Natural killer cell (primary cell): ENCODE measurements at regions of chr1 and their contacts with region 1.

Region 1: DNA sequence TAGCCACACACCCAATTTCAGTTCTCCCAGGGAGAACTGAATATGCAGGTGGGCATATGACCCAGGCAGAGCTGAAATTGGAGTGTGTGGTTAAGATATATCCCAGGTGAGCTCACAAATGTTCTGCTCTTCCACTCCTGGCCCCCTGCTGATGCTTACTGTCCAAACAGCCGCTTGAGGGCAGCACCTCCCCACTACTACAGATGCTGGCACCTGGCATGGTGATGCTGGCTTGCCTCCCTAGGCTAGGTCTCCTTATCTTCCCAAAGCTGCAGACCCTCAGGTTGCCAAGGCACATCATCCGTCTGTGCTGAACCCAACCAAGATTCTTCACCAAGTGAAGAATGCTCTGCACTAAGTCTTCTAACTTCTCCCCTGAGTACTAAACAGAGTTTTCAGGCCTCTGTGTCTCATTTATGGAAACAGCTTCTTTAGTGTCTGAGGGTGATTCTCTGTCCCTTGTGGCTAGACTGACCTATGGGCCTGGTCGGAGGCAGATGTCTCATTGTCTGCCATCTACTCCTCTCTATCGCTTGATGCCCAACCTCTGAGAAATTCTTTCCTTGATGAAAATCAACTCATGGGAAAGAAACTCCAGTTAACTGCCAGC is 27.2 kb downstream of the XCL1 start:
- DNase-seq: peak; percentile 60 to 81
- ATAC-seq: peak; percentile 74 to 98 (median 93)
- H3K4me3 ChIP-seq: no peak overlapping the region
- H3K4me3 Mint-ChIP-seq: no peak overlapping the region
- H3K27ac ChIP-seq: no peak overlapping the region
- H3K27ac Mint-ChIP-seq: no peak overlapping the region
- H3K4me1 ChIP-seq: no peaks in the 10 kb centered on the region
- H3K4me1 Mint-ChIP-seq: peaks cover 0 to 4% of the 10 kb centered on the region in 2 donors
- H3K27me3 ChIP-seq: no peaks in the 10 kb centered on the region
- H3K27me3 Mint-ChIP-seq: peaks cover 2 to 8% of the 10 kb centered on the region in 2 donors
- CTCF ChIP-seq: peak; percentile 82

Region 2: GRCh38 chr1:169133801-169134502 is 530.3 kb after region 1 on chr1:
- intact Hi-C with region 1: loop called (anchors 10 kb)
- DNase-seq: peak in 1 of 2 donors; percentile 13
- ATAC-seq: no peak
- H3K4me3 ChIP-seq: no peak overlapping the region
- H3K4me3 Mint-ChIP-seq: no peak overlapping the region
- H3K27ac ChIP-seq: peak overlapping the region; percentile 53
- H3K27ac Mint-ChIP-seq: peak overlapping the region; percentile 76 to 82
- H3K4me1 ChIP-seq: peaks cover 3% of the 10 kb centered on the region
- H3K4me1 Mint-ChIP-seq: peaks cover 24 to 25% of the 10 kb centered on the region in 2 donors
- H3K27me3 ChIP-seq: no peaks in the 10 kb centered on the region
- H3K27me3 Mint-ChIP-seq: no peaks in the 10 kb centered on the region
- CTCF ChIP-seq: peak; percentile 24

Region 3: DNA sequence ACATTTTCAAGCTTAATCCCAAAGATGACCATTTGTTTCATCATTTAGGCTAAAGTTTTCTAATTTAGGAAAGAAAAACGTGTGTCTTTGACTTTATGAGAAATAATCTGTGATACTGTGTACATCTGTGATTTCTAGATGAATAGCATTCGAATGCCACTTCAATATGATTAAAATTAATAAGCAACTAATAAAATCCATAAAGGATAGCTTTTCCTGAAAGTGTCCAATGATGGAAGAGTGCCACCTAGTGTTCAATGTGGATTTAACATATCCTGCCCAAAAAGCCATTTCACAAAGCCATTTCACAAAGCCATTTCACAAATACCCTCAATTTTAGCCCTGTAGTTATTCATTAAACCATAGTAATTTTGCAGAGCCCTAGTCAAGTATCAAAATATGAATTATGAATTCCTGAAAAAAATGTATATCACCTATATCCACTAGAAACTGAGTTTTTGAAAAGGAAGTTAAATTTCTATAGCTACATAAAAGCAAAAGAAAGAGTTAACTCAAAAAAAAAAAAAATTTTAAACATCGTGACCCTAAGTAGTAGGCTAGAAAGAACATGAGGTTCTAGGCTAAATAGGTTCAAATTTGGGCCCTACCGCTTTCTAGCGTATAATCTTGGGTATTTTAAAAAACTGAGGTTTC is 744.9 kb after region 1 on chr1:
- intact Hi-C with region 1: loop called (anchors 1 kb)
- DNase-seq: peak in 1 of 2 donors; percentile 82
- ATAC-seq: peak; percentile 50 to 58 (median 57)
- H3K4me3 ChIP-seq: no peak overlapping the region
- H3K4me3 Mint-ChIP-seq: no peak overlapping the region
- H3K27ac ChIP-seq: no peak overlapping the region
- H3K27ac Mint-ChIP-seq: no peak overlapping the region
- H3K4me1 ChIP-seq: no peaks in the 10 kb centered on the region
- H3K4me1 Mint-ChIP-seq: no peaks in the 10 kb centered on the region
- H3K27me3 ChIP-seq: no peaks in the 10 kb centered on the region
- H3K27me3 Mint-ChIP-seq: no peaks in the 10 kb centered on the region
- CTCF ChIP-seq: peak; percentile 88

Region 4: DNA sequence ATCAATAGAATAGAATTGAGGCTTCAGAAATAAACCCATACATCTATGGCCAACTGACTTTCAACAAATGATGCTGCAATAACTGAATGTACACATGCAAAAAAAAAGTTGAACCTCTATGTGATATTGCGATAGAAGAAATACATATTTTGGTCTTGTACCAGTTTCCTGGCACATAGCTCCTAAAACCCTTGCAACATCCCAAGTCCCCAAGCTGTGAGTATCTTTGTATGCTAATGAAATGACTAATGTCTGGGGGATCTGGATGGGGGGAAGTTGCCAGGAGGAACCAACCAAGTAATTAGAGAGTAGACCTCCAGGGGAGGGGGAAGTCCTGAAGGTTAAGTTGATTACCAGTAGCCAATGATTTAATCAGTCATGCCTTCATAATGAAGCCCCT is 788.8 kb after region 1 on chr1:
- intact Hi-C with region 1: no loop called
- DNase-seq: no peak
- ATAC-seq: no peak
- H3K4me3 ChIP-seq: no peak overlapping the region
- H3K4me3 Mint-ChIP-seq: no peak overlapping the region
- H3K27ac ChIP-seq: no peak overlapping the region
- H3K27ac Mint-ChIP-seq: no peak overlapping the region
- H3K4me1 ChIP-seq: no peaks in the 10 kb centered on the region
- H3K4me1 Mint-ChIP-seq: peaks cover 5 to 11% of the 10 kb centered on the region in 2 donors
- H3K27me3 ChIP-seq: no peaks in the 10 kb centered on the region
- H3K27me3 Mint-ChIP-seq: no peaks in the 10 kb centered on the region
- CTCF ChIP-seq: no peak

Region 5: GRCh38 chr1:169809370-169810095 is 1205.9 kb after region 1 on chr1:
- intact Hi-C with region 1: loop called (anchors 10 kb)
- DNase-seq: peak in 1 of 2 donors; percentile 67
- ATAC-seq: peak in 2 of 3 donors; percentile 48 to 50
- H3K4me3 ChIP-seq: no peak overlapping the region
- H3K4me3 Mint-ChIP-seq: no peak overlapping the region
- H3K27ac ChIP-seq: no peak overlapping the region
- H3K27ac Mint-ChIP-seq: no peak overlapping the region
- H3K4me1 ChIP-seq: no peaks in the 10 kb centered on the region
- H3K4me1 Mint-ChIP-seq: peaks cover 4 to 9% of the 10 kb centered on the region in 2 donors
- H3K27me3 ChIP-seq: no peaks in the 10 kb centered on the region
- H3K27me3 Mint-ChIP-seq: no peaks in the 10 kb centered on the region
- CTCF ChIP-seq: peak; percentile 78